ENCODE measurements at regions of chr3 and their contacts with region 1.

Region 1: DNA sequence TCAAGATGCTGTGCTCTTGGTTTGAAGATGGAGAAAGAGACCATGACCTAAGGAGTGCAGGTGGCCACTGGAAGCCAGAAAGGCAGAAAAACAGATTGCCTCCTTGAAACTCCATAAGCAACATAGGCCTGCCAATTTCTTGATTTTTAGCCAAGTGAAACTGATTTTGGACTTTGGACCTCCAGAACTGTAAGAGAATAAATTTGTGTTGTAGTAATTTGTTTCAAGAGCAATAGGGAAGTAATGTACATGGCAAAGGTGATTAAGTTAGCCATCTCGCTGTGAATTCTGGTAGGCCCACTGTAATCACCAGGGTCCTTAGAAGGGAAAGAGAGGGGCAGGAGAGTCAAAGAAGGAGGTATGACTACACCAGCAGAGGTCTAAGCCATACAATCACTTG is 238.8 kb downstream of the CNTN3 start:
- DNase-seq: no peak
- H3K4me3 ChIP-seq: no peak overlapping the region
- CTCF ChIP-seq: no peak

Region 2: DNA sequence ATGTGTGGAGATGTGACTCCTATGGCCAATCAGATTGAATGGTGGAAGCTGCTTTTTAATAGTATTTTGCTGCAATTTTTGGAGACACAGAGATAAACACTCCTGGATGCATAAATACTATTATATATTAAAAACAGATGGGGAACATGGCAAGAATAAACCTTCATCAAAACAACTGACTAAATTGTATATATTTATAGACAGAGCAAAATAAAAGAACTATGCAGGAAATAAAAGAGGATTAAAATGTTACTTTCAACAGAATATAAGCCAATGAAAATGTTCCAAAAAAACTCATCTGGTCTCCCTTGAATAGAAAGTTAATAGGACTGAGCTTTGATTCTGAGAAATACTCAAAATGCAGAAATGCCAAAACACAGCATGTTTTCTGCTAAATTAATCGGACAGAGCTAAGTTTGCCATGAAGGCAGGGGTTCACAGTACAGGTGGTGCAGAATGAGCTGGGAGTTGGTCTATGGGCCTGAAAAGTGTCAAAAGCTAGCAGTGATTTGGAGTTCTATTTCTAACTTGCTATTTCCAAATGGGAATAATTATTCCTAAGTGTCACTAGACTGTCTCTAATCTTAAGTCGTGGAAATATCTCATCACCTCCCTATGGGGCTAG is 11.6 kb after region 1 on chr3:
- CTCF ChIA-PET with region 1: interaction called, 16 read pairs
- POLR2A ChIA-PET with region 1: no interaction called
- DNase-seq: no peak
- H3K4me3 ChIP-seq: no peak overlapping the region
- CTCF ChIP-seq: no peak

Region 3: GRCh38 chr3:74630602-74631001 is 254.9 kb after region 1 on chr3:
- CTCF ChIA-PET with region 1: interaction called, 18 read pairs
- POLR2A ChIA-PET with region 1: no interaction called
- DNase-seq: no peak
- H3K4me3 ChIP-seq: no peak overlapping the region
- CTCF ChIP-seq: peak; percentile 41

Region 4: GRCh38 chr3:74739242-74739641 is 363.6 kb after region 1 on chr3:
- CTCF ChIA-PET with region 1: no interaction called
- POLR2A ChIA-PET with region 1: no interaction called
- DNase-seq: no peak
- H3K4me3 ChIP-seq: no peak overlapping the region
- CTCF ChIP-seq: no peak

Measured in AG04449 (cell line).